ENCODE measurements at regions of chr19 and their contacts with region 1.

Region 1: DNA sequence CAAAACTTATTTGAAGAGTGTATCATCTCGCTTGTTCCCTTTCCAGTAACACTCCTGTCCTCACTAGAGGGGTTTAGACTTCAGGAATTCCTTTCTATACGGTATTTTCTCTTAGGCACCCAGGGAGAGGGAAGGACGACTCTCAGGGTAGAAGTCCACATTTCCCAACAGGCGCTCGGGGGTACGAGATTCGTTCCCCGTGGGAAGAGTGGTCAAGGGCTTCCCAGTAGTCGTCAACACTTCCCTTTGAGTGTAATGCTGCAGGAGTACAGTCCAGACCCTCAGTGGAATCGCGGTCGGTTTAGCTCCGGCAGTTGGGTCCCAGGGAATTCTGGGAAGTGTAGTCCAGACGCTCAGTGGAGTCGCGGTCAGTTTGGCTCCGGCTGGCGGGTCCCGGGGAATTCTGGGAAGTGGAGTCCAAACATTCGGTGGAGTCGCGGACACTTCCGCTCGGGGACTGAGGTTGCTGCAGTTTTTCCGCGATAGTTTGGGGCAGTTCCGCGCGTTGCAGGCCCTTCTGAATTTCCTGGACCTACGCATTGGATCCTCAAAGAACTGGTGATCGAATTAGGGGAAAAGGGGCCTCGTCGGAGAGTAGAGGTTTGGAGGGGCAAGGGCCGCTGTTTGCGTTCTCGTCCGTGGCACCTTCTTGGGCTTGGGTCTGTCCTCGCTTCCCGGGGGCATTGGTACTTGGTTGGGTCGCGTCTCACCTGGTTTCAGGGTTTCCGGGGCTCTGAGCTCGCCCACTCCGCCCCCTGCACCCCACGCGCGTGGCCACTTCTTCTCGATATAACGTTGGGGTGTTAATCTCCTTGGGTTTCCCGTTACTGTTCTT is at the start of gene ZNF224:
- DNase-seq: peak; percentile 89
- H3K4me3 ChIP-seq: peak within 1 kb of the TSS; percentile 8 to 52 (median 49)
- H3K27ac ChIP-seq: peak within 1 kb of the TSS; percentile 42 to 54 (median 44)
- H3K4me1 ChIP-seq: peaks cover 0 to 8% of the 10 kb centered on the region in 2 donors
- H3K27me3 ChIP-seq: no peaks in the 10 kb centered on the region
- CTCF ChIP-seq: no peak
- POLR2A ChIP-seq: peak in 1 of 2 donors; percentile 54
- total RNA-seq, gene ZNF224: 31.9 to 47.4 (median 36.7) TPM

Region 2: GRCh38 chr19:43983912-43984686 is 110.0 kb before region 1 on chr19 and contains the start of gene ZNF155:
- intact Hi-C with region 1: loop called (anchors 10 kb)
- DNase-seq: peak; percentile 93 to 94
- H3K4me3 ChIP-seq: peak within 1 kb of the TSS; percentile 24 to 84 (median 61)
- H3K27ac ChIP-seq: peak within 1 kb of the TSS; percentile 8 to 59 (median 52)
- H3K4me1 ChIP-seq: peaks cover 5 to 6% of the 10 kb centered on the region in 2 donors
- H3K27me3 ChIP-seq: no peaks in the 10 kb centered on the region
- CTCF ChIP-seq: no peak
- POLR2A ChIP-seq: peak in 1 of 2 donors; percentile 26
- total RNA-seq, gene ZNF155: 8.7 to 20.8 (median 16.0) TPM

Region 3: DNA sequence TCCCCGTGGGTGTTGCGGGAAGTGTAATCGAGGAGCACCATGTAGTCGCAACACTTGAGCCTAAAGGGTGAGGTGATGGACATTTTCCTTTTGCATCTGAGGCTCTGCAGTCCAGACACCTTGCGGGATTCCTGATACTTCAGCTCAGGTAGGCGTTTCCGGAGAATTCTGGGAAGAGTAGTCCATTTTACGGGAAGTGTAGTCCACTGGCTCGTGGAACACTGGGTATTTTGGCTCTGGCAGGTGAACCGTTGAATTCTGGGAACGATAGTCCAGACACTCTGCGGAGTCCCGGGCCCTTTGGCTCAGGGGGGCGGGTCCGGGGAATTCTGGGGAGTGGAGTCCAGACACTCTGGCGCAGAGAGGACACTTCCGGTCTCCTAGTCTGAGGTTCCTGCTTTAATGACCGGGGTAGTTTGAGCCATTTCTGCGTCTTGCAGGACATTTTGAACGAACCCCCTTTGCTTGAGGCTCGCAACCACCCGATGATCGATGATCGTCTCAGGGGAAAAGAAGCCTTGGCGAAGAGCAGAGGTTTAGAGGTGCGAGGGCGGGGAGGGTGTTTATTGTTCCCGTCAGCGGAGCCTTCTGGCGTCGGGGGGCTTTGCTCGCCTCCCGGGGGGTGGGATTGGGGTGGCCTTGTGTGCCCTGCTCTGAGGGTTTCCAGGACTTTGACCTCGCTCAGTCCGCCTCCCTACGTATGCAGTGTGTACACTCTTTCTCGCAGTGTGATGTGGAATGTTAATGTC is 42.3 kb before region 1 on chr19 and contains the start of gene ZNF223:
- intact Hi-C with region 1: no loop called
- DNase-seq: peak; percentile 96 to 97
- H3K4me3 ChIP-seq: peak within 1 kb of the TSS; percentile 65 to 71 (median 67)
- H3K27ac ChIP-seq: peak within 1 kb of the TSS in 2 of 3 donors; percentile 41 to 62
- H3K4me1 ChIP-seq: peaks cover 11% of the 10 kb centered on the region in 2 donors
- H3K27me3 ChIP-seq: no peaks in the 10 kb centered on the region
- CTCF ChIP-seq: no peak
- POLR2A ChIP-seq: peak in 1 of 2 donors; percentile 52
- total RNA-seq, gene ZNF223: 5.1 to 10.6 (median 10.0) TPM